PC-9 (cell line): ENCODE measurements at regions of chr2 and their contacts with region 1.

Region 1: DNA sequence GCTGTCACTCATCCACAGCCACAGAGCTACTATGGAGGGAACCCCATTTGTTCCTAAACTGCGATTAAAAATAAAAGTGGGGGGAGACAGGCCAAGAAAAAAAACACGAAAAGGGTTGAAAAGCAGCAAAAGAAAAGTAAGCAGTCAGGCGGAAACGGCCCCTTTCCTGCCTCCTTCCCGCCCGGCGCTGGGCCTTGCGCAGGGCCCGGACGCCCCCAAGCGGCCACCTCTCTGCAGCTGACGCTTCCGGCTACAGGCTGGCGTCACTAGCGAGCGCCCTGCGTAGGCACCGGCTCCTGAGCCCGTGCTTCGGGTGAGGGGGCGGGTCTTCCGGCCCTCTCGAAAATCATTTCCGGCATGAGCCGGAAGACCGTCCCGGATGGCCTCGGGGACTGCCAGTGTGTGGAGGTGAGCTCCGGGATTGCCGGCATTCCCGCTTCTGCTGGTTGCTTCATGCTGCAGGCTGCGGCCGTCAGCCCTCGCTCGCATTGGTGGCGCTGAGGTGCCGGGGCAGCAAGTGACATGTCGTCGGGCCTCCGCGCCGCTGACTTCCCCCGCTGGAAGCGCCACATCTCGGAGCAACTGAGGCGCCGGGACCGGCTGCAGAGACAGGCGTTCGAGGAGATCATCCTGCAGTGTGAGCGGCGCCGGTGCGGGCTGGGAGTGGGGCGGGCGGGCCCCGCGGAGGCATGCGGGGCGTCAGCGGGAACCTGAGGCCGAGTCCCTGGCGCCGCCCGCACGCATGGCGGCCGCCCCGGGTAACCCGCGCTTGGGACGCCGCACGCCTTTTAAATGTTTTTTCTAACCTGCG is at the start of gene ATG16L1:
- DNase-seq: peak; percentile 96 to 99
- H3K4me3 ChIP-seq: peak within 1 kb of the TSS; percentile 94
- H3K27ac ChIP-seq: peak within 1 kb of the TSS; percentile 62
- H3K4me1 ChIP-seq: peaks cover 58% of the 10 kb centered on the region
- H3K27me3 ChIP-seq: no peaks in the 10 kb centered on the region
- CTCF ChIP-seq: peak; percentile 94
- total RNA-seq, gene ATG16L1: 55.7 and 63.9 TPM in 2 replicates

Region 2: GRCh38 chr2:232550354-232551249 is 700.9 kb before region 1 on chr2 and contains the starts of genes EIF4E2 and TIGD1:
- CTCF ChIA-PET with region 1: no interaction called
- POLR2A ChIA-PET with region 1: no interaction called
- intact Hi-C with region 1: loop called (anchors 5 kb)
- DNase-seq: peak; percentile 81 to 95
- H3K4me3 ChIP-seq: peak within 1 kb of the TSS; percentile 87
- H3K27ac ChIP-seq: peak within 1 kb of the TSS; percentile 89
- H3K4me1 ChIP-seq: peaks cover 13% of the 10 kb centered on the region
- H3K27me3 ChIP-seq: no peaks in the 10 kb centered on the region
- CTCF ChIP-seq: no peak; the same call in 1 of the 2 replicates
- total RNA-seq, gene EIF4E2: 69.3 and 69.6 TPM in 2 replicates
- total RNA-seq, gene TIGD1: 12.7 and 14.7 TPM in 2 replicates

Region 3: GRCh38 chr2:232838406-232838874 is 413.1 kb before region 1 on chr2:
- CTCF ChIA-PET with region 1: interaction called, 3 read pairs
- POLR2A ChIA-PET with region 1: no interaction called
- intact Hi-C with region 1: loop called (anchors 5 kb)
- DNase-seq: peak; percentile 44 to 85
- H3K4me3 ChIP-seq: no peak overlapping the region
- H3K27ac ChIP-seq: peak overlapping the region; percentile 45
- H3K4me1 ChIP-seq: peaks cover 24% of the 10 kb centered on the region
- H3K27me3 ChIP-seq: no peaks in the 10 kb centered on the region
- CTCF ChIP-seq: no peak

Region 4: GRCh38 chr2:232988765-232989085 is 262.8 kb before region 1 on chr2:
- CTCF ChIA-PET with region 1: no interaction called
- POLR2A ChIA-PET with region 1: interaction called, 5 read pairs
- intact Hi-C with region 1: loop called (anchors 1 kb)
- DNase-seq: no peak
- H3K4me3 ChIP-seq: 0 out of 2 replicates have a peak overlapping the region, but pooled peaks have one; percentile 19
- H3K27ac ChIP-seq: peak overlapping the region; percentile 95
- H3K4me1 ChIP-seq: peaks cover 50% of the 10 kb centered on the region
- H3K27me3 ChIP-seq: no peaks in the 10 kb centered on the region
- CTCF ChIP-seq: no peak

Region 5: GRCh38 chr2:233120459-233120858 is 131.1 kb before region 1 on chr2:
- CTCF ChIA-PET with region 1: no interaction called
- POLR2A ChIA-PET with region 1: no interaction called
- intact Hi-C with region 1: loop called (anchors 2 kb)
- DNase-seq: peak; percentile 57 to 71
- H3K4me3 ChIP-seq: no peak overlapping the region
- H3K27ac ChIP-seq: no peak overlapping the region
- H3K4me1 ChIP-seq: peaks cover 48% of the 10 kb centered on the region
- H3K27me3 ChIP-seq: no peaks in the 10 kb centered on the region
- CTCF ChIP-seq: no peak

Region 6: GRCh38 chr2:233189025-233189424 is 62.5 kb before region 1 on chr2:
- CTCF ChIA-PET with region 1: no interaction called
- POLR2A ChIA-PET with region 1: no interaction called
- intact Hi-C with region 1: no loop called
- DNase-seq: no peak
- H3K4me3 ChIP-seq: no peak overlapping the region
- H3K27ac ChIP-seq: no peak overlapping the region
- H3K4me1 ChIP-seq: no peaks in the 10 kb centered on the region
- H3K27me3 ChIP-seq: no peaks in the 10 kb centered on the region
- CTCF ChIP-seq: no peak

Region 7: DNA sequence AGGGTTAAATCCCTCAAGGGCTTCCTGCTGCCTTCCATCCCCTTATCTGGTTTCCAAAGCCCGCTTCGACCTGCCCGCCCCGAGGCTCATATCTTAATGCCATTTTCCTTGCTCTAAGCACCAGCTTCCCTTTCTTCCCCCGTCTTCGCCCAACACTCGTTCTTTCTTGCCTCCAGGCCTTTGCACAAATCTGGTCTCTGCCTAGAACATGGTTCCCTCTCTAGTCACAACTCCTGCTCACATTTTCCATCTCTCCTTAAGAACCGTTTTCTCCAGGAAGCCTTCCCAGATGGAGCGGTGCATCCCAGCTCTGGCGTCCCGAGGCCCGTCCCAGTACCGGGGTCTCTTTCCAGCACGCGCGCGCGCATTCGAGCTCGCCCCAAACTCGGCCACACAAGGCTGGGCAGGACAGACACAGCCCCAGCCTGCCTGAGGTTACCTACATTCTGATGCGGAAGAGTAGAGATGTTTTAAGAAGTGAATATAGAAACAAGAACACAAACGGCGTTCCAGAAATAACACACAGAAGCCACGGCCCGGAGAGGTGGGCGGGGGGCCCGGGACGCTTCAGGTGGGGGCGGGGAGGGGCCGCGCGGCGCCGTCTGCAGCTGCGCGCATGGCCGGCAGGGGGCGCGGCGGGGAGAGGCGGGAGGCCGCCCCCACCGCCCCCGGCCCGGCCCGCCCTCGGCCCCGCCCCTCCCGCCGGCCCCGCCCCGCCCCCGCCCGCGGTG is 102.4 kb after region 1 on chr2 and contains the start of gene DGKD:
- CTCF ChIA-PET with region 1: no interaction called
- POLR2A ChIA-PET with region 1: no interaction called
- intact Hi-C with region 1: loop called (anchors 5 kb)
- DNase-seq: peak; percentile 78 to 79
- H3K4me3 ChIP-seq: peak within 1 kb of the TSS; percentile 67
- H3K27ac ChIP-seq: peak within 1 kb of the TSS; percentile 65
- H3K4me1 ChIP-seq: peaks cover 79% of the 10 kb centered on the region
- H3K27me3 ChIP-seq: no peaks in the 10 kb centered on the region
- CTCF ChIP-seq: peak; percentile 76
- total RNA-seq, gene DGKD: 43.1 and 59.5 TPM in 2 replicates